H1 (cell line): ENCODE measurements at regions of chr1 and their contacts with region 1.

Region 1: DNA sequence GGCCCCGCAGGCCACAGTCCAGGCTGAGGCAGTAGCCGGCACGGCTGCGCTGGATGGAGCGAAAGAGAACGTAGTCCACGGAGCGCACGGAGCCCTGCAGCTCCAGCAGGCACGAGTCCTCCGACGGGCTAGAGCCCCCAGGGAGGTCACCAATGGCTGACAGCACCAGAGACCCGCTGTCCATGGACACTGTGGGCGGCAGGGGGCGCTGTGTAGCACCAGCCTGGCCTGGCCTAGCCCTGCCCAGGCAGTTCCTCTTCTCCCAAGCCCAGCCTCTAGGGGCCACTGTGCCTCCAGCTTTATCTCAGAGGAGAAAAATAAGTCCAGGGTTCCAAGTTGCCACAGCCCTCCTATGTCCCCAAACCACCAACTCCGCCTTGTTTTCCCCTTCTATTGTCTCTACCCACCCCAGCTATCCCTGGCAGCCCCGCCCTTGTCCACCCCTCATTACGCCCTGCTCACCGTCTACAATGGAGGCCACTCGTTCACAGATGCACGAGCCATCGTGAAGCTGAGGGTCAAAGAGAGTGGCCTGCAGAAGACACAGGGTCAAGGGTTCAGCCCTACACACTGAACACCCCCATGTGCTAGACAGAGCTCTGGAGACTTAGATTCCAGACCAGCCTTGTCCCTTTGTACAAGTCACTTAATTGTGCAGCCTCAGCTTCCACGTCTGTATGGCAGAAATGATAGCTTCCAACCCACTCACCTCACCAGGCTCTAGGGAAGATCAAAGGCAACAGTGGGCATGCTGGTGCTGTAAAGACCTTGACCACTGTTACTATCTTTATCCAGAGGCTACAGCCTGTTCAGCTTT is 4.4 kb downstream of the ENTREP3 start:
- DNase-seq: peak in 1 of 2 experiments; percentile 100
- H3K4me3 ChIP-seq: peak overlapping the region; percentile 11 to 64 (median 58)
- H3K27ac ChIP-seq: no peak overlapping the region; the same call in 1 of the 2 replicates
- H3K4me1 ChIP-seq: peaks cover 0 to 20% (median 13%) of the 10 kb centered on the region in 4 experiments; a peak in 6 of 7 replicates
- H3K27me3 ChIP-seq: peaks cover 0 to 8% (median 4%) of the 10 kb centered on the region in 4 experiments; a peak in 2 of 7 replicates
- CTCF ChIP-seq: peak; percentile 100
- EP300 ChIP-seq: no peak
- POLR2A ChIP-seq: no peak
- RAD21 ChIP-seq: peak; percentile 88 to 90

Region 2: DNA sequence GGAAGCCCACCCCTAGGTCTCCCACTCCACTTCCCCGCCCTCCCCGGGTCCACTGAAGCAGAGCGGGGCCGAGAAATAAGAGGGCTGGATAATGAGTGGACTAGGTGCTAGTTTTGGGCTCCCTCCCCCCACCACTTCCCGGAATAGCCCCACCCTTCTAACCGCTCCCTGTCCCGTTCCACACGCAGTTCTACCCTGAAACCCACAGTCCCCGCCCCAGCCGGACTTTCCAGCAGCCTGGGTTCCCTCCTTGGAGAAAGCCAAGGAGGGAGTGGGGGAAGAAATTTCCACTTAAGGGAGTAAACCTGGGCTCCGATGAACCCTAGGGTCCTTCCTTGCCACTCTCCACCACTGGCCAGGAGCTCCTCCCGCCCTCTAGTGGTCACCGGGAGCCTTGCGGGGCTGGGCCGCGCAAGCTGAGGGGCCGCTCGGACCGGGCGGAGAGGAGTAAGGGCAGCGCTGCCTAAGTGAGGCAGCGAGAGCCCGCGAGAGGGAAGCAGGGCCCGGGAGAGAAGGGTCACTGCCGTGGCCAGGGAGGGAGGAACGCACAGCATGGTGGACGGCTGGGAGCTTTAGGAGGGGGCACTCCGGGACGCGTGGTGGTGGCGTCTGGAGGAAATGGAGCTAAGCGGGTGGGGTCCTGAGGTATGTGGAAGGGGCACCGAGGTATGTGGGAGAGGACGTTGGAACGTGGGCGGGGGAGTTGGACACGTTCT is 57.4 kb before region 1 on chr1:
- CTCF ChIA-PET with region 1: interaction called, 12 read pairs
- POLR2A ChIA-PET with region 1: interaction called, 12 read pairs
- DNase-seq: peak in 1 of 2 experiments; percentile 99
- H3K4me3 ChIP-seq: peak overlapping the region; percentile 60 to 98 (median 96)
- H3K27ac ChIP-seq: peak overlapping the region; percentile 94
- H3K4me1 ChIP-seq: peaks cover 9 to 31% (median 25%) of the 10 kb centered on the region in 4 experiments
- H3K27me3 ChIP-seq: no peaks in the 10 kb centered on the region
- CTCF ChIP-seq: peak in 2 of 3 experiments; percentile 93; a peak in 3 of 4 replicates
- EP300 ChIP-seq: peak in 1 of 2 experiments; percentile 70; a peak in 1 of 3 replicates
- POLR2A ChIP-seq: no peak; a peak in 1 of 3 replicates
- RAD21 ChIP-seq: peak; percentile 49 to 70

Region 3: DNA sequence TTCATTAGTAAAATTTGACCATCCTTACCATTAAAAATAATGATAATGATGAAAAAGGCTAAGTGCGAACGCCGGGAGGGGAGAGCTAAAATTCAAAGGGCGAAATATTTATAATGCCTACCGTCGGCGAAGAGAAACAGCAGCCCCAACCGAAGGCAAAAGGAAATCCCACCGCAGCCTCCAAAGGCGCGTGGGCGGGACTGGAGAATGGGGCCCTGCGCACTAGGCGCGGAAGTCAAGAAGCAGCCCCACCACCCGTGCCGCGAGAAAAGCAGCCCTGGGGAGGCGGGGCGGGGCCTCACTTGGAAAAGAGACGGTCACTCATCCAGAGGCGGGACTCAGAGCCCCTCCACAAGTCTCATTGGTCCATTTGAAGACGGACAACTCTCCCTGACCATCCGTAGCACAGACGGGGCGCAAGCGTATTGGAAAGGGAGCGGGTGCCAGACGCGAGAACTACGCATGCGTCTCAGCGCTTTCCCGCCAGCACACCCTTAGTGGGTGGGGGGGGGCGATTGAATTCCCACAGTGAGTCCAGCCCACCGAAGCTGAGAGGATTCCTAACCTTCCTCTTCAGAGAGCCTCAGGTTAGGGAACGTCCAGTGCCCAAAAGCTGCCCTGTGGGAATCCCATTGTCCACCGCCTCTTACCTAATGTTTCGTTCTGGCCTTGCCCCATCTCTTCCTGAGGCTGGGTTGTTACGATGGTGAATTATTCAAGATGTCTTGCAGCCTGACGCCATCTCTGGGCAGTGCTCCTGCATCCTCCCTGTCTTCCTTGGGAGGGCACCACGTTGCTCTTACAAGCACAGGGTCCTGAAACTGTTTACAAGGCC is 23.4 kb before region 1 on chr1:
- CTCF ChIA-PET with region 1: interaction called, 20 read pairs
- POLR2A ChIA-PET with region 1: interaction called, 4 read pairs
- DNase-seq: peak; percentile 95 to 96
- H3K4me3 ChIP-seq: peak overlapping the region; percentile 67 to 92 (median 82)
- H3K27ac ChIP-seq: peak overlapping the region; percentile 91
- H3K4me1 ChIP-seq: peaks cover 0 to 14% (median 4%) of the 10 kb centered on the region in 4 experiments; a peak in 5 of 7 replicates
- H3K27me3 ChIP-seq: peaks cover 0 to 2% (median 0%) of the 10 kb centered on the region in 4 experiments; a peak in 1 of 7 replicates
- CTCF ChIP-seq: peak in 2 of 3 experiments; percentile 14 to 17; a peak in 2 of 4 replicates
- EP300 ChIP-seq: no peak
- POLR2A ChIP-seq: peak; percentile 76 to 91
- RAD21 ChIP-seq: no peak

Region 4: GRCh38 chr1:155277070-155277895 is 26.4 kb after region 1 on chr1 and contains the start of gene HCN3:
- CTCF ChIA-PET with region 1: interaction called, 29 read pairs
- POLR2A ChIA-PET with region 1: interaction called, 30 read pairs
- DNase-seq: peak; percentile 95 to 100
- H3K4me3 ChIP-seq: peak within 1 kb of the TSS; percentile 60 to 82 (median 76)
- H3K27ac ChIP-seq: no peak within 1 kb of the TSS
- H3K4me1 ChIP-seq: peaks cover 9 to 17% (median 13%) of the 10 kb centered on the region in 4 experiments
- H3K27me3 ChIP-seq: peaks cover 0 to 3% (median 0%) of the 10 kb centered on the region in 4 experiments; a peak in 2 of 7 replicates
- CTCF ChIP-seq: peak; percentile 42 to 52 (median 51)
- EP300 ChIP-seq: no peak
- POLR2A ChIP-seq: no peak
- RAD21 ChIP-seq: peak in 1 of 2 experiments; percentile 30; a peak in 2 of 4 replicates
- total RNA-seq, gene HCN3: 5.5 and 6.4 TPM in 2 replicates

Region 5: DNA sequence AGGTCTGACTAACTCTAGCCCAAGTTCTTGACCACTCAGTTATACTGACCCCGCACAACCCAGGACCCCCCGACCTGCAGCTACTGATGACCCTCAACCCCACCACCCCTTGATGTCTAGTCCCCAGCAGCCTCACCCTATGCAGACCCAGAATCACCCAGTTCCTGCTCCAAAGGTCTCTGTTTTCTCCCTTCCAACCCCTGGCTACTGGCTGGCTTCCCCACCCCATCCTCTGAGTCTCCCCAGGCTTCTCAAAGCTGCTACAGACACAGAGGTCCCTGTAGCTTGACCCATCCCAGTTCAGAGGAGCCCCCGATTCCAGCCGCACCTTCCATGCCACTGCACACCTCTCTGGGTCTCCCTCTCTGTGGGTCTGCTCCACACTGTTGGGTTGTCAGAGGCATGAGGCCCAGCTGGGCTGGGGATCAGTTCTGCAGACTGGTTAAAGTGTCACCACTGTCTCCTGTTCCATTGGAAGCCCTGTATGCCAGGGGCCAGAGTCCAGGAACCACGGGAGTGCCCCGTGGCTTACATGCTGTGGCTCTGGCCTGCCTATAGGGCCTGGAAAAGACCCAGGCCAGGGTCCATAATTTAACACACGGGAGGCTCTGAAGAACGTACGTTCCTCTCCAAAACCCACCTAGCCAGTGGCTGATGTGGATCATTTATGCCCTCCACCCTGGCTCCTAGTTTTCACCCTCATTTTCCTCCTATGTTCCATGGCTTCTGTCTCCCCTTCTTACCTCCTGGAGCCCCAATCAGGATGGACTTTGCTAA is 49.9 kb after region 1 on chr1:
- CTCF ChIA-PET with region 1: interaction called, 103 read pairs
- POLR2A ChIA-PET with region 1: interaction called, 3 read pairs
- DNase-seq: no peak
- H3K4me3 ChIP-seq: no peak overlapping the region
- H3K27ac ChIP-seq: no peak overlapping the region
- H3K4me1 ChIP-seq: peaks cover 3 to 13% (median 3%) of the 10 kb centered on the region in 4 experiments; a peak in 6 of 7 replicates
- H3K27me3 ChIP-seq: no peaks in the 10 kb centered on the region; a peak in 2 of 7 replicates
- CTCF ChIP-seq: no peak
- EP300 ChIP-seq: no peak
- POLR2A ChIP-seq: no peak
- RAD21 ChIP-seq: no peak

Region 6: DNA sequence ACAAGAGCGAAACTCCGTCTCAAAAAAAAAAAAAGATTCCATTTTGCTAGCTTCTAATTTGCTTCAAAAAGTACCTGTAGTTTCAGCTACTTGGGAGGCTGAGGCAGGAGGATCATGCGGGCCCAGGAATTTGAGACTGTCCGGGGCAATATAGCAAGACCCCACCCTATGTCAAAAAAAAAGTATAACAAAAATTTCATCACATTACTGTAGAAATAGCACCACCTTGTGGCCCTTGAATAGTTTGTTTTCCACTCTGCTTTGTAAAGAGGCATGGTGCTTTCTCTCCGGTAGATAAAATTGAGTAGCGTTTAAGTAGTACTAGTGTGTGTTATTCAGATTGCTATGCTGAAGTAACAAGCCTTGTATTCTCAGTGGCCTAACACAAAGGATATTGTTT is 340.9 kb after region 1 on chr1:
- CTCF ChIA-PET with region 1: interaction called, 22 read pairs
- POLR2A ChIA-PET with region 1: no interaction called
- DNase-seq: no peak
- H3K4me3 ChIP-seq: no peak overlapping the region
- H3K27ac ChIP-seq: no peak overlapping the region
- H3K4me1 ChIP-seq: no peaks in the 10 kb centered on the region; a peak in 1 of 7 replicates
- H3K27me3 ChIP-seq: no peaks in the 10 kb centered on the region
- CTCF ChIP-seq: peak in 2 of 3 experiments; percentile 38 to 52; a peak in 2 of 4 replicates
- EP300 ChIP-seq: no peak
- POLR2A ChIP-seq: no peak
- RAD21 ChIP-seq: peak; percentile 74 to 79